ENCODE measurements at regions of chr3 and their contacts with region 1.

Region 1: DNA sequence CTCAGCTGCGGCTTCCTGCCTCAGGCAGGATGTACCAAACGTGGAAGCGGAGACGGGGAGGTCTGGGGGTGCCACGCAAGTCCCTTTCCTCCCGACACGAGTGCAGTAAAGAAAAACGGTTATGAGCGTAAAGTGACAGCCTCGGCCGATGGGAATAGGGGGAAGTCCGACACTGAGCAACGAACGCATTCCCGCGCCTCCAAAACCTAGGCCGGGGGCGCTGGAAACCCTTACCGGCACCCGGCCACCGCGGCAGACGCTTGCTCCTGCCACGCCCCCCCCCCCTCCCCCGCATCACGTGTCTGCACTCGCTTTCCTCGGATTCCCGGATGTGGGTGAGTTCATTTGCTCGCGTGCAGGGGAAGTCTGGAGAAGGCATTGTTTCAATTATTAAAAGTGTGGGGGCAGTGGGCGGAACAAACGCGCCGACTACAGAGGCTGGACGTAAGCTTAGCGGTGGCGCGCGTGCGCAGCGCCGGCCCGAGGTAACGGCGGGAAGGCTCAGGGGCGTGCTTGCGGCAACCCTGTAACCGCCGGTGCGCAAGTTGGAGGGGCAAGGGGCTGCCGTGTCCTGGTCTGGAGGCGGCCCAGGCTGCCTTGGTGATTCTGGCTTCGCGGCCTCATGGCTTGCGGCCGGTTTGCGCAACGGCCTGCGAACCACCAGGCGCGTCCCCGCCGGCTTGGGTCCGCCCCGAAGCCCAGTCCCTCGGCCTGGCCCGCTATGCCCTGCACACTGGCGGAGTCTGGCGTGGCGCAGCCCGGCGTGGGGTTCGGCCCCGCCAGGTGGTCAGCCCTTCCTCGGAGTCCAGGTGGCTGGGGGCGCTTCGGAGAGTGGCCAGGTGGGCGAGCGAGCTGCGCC is at the starts of genes ANAPC13 and CEP63:
- DNase-seq: peak; percentile 99
- H3K4me3 ChIP-seq: peak within 1 kb of the TSS; percentile 75 to 88 (median 75)
- H3K27ac ChIP-seq: peak within 1 kb of the TSS; percentile 92
- H3K4me1 ChIP-seq: peaks cover 45% of the 10 kb centered on the region
- H3K27me3 ChIP-seq: no peaks in the 10 kb centered on the region
- CTCF ChIP-seq: no peak
- POLR2A ChIP-seq: peak; percentile 82
- total RNA-seq, gene ANAPC13: 50.8 and 58.6 TPM in 2 replicates
- total RNA-seq, gene CEP63: 24.9 and 29.4 TPM in 2 replicates

Region 2: DNA sequence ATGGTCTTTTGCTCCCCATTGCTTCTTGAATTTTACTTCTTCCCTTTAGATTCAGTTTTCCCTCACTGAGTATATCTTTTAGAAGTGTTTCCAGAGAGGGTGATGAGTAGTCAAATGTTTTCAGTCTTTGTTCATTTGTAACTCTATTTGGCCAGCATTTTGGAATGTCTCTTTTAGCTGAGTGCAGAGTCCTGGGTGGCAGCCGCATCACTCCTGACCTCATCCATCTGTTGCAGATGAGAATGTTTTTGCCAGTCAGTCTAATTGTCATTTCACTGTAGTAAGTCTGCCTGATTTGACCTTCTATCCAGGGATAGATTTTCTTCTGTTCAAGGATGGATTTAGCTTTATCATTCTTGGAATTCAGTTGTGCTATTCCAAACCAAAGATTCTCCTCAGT is 673.1 kb before region 1 on chr3:
- CTCF ChIA-PET with region 1: no interaction called
- POLR2A ChIA-PET with region 1: no interaction called
- dilution Hi-C with region 1: no loop called
- intact Hi-C with region 1: loop called (anchors 10 kb)
- DNase-seq: no peak
- H3K4me3 ChIP-seq: no peak overlapping the region
- H3K27ac ChIP-seq: no peak overlapping the region
- H3K4me1 ChIP-seq: no peaks in the 10 kb centered on the region
- H3K27me3 ChIP-seq: no peaks in the 10 kb centered on the region
- CTCF ChIP-seq: no peak
- POLR2A ChIP-seq: no peak

Region 3: DNA sequence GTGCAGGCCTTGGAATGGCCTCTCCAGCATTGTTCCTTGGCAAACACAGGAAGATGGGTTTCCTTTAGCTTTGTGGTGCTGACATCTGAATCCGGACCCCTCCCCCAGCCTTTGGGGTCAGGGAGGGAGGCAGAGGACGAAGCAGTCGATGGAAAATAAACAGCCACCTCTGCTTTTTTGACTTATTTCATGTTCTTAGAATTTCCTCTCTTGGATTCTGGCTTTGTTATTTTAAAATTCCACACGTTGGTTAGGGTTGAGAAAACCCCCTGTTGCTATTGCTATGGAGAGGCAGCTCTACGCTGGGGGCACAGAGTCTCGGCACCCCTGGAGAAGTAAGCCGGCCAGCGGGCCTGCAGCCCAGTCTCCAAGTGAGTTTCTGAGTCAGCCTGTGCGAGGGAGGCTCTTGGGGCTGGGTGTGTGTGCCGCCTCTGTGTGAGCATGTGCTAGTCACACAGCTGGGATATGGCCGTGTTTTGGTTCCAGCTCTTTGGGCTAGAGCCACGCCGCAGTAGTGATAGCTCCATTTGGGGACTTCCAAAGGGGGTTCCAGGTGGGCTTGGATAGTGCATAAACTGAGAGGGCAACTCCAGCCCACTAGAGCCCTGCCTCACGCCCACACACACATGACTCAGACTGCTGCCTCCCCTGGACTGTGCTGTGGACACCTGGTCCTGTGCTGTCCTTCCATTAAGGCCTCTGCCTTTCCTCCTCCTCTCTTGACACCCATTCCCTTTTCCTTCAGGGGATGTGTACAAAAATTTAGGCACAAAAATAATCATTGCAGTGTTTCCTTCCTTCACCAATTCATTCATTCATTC is 170.5 kb before region 1 on chr3:
- CTCF ChIA-PET with region 1: interaction called, 6 read pairs
- POLR2A ChIA-PET with region 1: interaction called, 4 read pairs
- dilution Hi-C with region 1: no loop called
- intact Hi-C with region 1: loop called (anchors 1 kb)
- DNase-seq: peak; percentile 85
- H3K4me3 ChIP-seq: peak overlapping the region in 1 of 3 experiments; percentile 0
- H3K27ac ChIP-seq: peak overlapping the region; percentile 87
- H3K4me1 ChIP-seq: peaks cover 39% of the 10 kb centered on the region
- H3K27me3 ChIP-seq: no peaks in the 10 kb centered on the region
- CTCF ChIP-seq: no peak
- POLR2A ChIP-seq: peak; percentile 57

Region 4: DNA sequence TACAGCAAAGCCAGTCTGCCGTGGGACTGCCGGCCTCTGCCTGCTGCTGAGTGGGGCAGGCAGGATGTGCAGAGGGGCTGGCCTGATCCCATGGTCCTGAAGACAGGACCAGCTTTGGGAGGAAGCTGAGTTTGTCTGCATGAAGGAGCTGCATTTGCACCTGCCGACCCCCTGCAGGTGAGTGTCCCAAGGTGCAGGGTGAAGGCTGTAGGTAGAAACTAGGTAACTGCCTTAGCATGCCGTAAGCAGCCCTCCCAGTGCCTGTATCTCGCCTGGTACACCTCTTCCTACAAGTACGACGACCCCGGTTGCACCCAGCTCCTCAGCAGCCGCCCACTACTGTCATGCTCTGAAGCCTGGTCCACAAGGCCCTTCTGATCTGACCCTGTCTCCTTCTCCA is 146.6 kb before region 1 on chr3:
- CTCF ChIA-PET with region 1: no interaction called
- POLR2A ChIA-PET with region 1: no interaction called
- dilution Hi-C with region 1: no loop called
- intact Hi-C with region 1: no loop called
- DNase-seq: no peak
- H3K4me3 ChIP-seq: no peak overlapping the region
- H3K27ac ChIP-seq: no peak overlapping the region
- H3K4me1 ChIP-seq: peaks cover 6% of the 10 kb centered on the region
- H3K27me3 ChIP-seq: no peaks in the 10 kb centered on the region
- CTCF ChIP-seq: no peak
- POLR2A ChIP-seq: no peak

Region 5: DNA sequence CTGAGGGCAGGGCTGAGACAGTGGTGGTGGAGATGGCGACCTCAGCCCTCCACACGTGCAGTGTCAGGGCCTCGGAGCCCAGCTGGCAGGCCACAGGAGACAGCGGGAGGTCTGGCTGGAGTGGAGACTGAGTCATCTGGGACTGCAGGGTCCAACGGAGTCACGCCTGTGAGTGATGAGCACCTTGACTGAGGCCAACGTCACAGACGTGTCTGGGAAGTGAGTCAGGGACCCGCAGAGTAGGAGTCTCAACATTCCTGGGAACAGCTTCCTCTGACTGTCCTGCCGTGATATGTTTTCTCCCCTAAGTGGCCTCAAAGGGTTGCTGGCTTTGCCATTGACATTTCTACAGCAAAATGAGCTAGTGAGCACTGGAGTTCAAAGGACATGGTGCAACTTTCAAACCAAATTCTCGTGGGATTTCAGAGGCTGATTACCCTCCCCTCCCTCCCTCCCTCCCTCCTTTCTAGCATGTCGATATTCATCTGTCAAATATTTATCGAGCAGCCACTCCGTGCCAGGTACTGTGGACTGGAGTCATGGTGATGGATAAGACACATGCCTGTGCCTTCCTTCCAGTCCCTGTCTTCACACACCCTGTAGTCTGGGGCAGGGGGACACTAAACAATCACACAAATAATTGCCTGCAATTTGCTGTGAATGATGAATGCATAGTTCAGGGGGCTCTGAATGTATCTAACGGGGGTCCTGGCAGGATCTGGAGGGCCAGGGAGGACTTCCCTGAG is 58.4 kb before region 1 on chr3:
- CTCF ChIA-PET with region 1: no interaction called
- POLR2A ChIA-PET with region 1: interaction called, 3 read pairs
- dilution Hi-C with region 1: no loop called
- intact Hi-C with region 1: loop called (anchors 1 kb)
- DNase-seq: peak; percentile 77
- H3K4me3 ChIP-seq: no peak overlapping the region
- H3K27ac ChIP-seq: peak overlapping the region; percentile 73
- H3K4me1 ChIP-seq: peaks cover 8% of the 10 kb centered on the region
- H3K27me3 ChIP-seq: peaks cover 5 to 11% of the 10 kb centered on the region in 2 experiments
- CTCF ChIP-seq: no peak
- POLR2A ChIP-seq: no peak

Measured in endothelial cell of umbilical vein (primary cell).